MCF 10A (cell line): ENCODE measurements at regions of chr1 and their contacts with region 1.

Region 1: DNA sequence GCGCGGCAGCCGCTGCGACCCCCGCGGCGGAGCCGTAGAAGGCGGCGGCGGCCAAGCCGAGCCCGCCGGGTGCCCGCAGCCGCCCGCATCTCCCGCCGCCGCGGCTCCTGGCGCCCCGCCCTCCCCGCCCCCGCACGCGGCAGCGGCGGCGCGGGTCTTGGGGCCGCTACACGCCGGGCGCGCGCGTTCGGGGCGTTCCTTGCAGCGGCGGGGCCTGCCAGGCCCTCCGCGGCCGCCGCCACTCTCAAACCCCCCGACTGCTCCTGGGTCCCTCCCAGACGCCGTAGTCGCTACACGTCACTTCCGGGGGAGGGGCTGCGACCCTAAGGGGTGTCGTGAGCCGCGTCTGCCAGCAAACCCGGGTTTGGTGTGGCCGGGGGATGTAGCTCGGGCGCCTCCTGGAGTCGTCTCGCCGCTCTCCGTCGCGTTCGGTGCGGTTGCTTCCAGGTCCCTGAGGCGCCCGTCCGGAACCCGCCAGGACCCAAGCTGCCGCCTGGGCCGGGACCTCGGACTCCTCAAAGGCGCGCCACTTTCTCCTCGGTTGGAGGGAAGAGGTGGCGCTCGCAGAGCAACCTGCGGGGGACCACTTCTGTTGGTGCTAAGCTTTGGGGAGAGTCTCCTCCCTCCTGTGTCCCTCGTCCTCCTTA is at the start of gene ELK4:
- DNase-seq: peak; percentile 100
- H3K4me3 Mint-ChIP-seq: peak within 1 kb of the TSS; percentile 90
- H3K27ac Mint-ChIP-seq: peak within 1 kb of the TSS; percentile 91
- H3K4me1 Mint-ChIP-seq: peaks cover 35% of the 10 kb centered on the region
- H3K27me3 Mint-ChIP-seq: no peaks in the 10 kb centered on the region
- CTCF ChIP-seq: peak; percentile 87
- total RNA-seq, gene ELK4: 101 and 109 TPM in 2 replicates

Region 2: DNA sequence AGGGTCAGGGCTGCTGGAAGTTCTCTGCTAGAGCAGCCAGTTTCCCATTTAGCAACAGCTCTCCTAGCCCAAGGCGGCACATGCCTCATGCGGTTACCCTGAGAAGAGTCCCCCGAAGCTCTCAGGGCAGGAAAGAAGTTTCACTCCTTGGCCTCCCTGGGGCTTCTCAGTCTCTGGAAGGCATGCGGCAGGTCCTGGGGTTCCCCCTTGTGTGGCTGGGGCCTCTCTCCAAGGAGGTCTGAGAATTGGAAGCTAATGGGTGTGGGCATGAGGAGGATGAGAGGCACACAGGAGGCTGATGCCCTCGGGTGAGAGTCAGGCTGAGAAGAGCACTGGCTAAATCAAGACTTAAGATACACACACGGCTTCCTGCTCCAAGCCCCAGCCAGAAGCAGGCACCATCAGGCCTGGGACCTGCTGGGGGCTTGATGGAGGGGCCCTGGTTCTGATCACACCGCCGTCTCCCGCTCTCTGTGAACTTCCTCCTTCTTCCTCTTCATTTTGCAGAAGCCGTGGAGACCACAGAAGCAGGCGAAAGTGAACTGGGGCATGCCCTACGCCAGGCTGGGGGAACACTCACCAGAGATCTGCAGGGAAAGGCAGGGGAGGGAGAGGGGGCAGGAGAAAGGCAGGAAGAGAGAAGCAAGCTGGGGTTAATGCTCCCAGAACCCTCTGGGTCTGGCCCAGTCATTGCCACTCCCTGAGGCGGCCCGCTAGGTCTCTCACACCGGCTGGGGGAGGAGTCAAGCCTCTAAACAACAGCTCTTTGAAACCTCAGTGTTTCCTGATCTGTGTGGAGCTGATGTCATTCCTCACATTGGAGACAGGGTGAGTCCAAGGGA is 191.2 kb before region 1 on chr1:
- CTCF ChIA-PET with region 1: no interaction called
- POLR2A ChIA-PET with region 1: no interaction called
- intact Hi-C with region 1: no loop called
- DNase-seq: peak; percentile 93
- H3K4me3 Mint-ChIP-seq: peak overlapping the region; percentile 1
- H3K27ac Mint-ChIP-seq: peak overlapping the region; percentile 77
- H3K4me1 Mint-ChIP-seq: peaks cover 25% of the 10 kb centered on the region
- H3K27me3 Mint-ChIP-seq: no peaks in the 10 kb centered on the region
- CTCF ChIP-seq: no peak

Region 3: GRCh38 chr1:205493241-205494085 is 138.4 kb before region 1 on chr1:
- CTCF ChIA-PET with region 1: interaction called, 4 read pairs
- POLR2A ChIA-PET with region 1: interaction called, 23 read pairs
- intact Hi-C with region 1: no loop called
- DNase-seq: peak; percentile 99
- H3K4me3 Mint-ChIP-seq: peak overlapping the region; percentile 53
- H3K27ac Mint-ChIP-seq: peak overlapping the region; percentile 86
- H3K4me1 Mint-ChIP-seq: peaks cover 38% of the 10 kb centered on the region
- H3K27me3 Mint-ChIP-seq: no peaks in the 10 kb centered on the region
- CTCF ChIP-seq: no peak

Region 4: GRCh38 chr1:205543411-205544301 is 88.2 kb before region 1 on chr1:
- CTCF ChIA-PET with region 1: interaction called, 4 read pairs
- POLR2A ChIA-PET with region 1: interaction called, 25 read pairs
- intact Hi-C with region 1: loop called (anchors 2 kb)
- DNase-seq: peak; percentile 99
- H3K4me3 Mint-ChIP-seq: peak overlapping the region; percentile 66
- H3K27ac Mint-ChIP-seq: peak overlapping the region; percentile 58
- H3K4me1 Mint-ChIP-seq: peaks cover 9% of the 10 kb centered on the region
- H3K27me3 Mint-ChIP-seq: peaks cover 7% of the 10 kb centered on the region
- CTCF ChIP-seq: no peak

Region 5: DNA sequence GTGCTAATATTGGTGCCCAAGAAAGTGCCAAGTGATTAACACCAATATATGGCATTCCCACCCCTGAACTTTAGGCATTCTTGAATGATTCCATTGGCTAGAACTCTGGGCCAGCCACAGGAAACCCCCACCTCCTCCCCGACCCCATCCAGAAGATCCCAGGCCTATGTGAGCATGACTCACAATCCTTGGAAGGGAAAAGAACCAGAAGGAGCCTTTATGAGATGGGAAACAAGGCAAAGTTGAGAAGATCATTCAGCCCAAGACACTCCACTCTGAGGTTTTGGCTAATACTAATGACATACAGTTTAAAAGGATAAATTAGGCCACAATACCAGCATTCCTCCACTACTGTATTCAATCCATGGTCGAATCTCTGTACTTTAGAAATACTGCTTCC is 21.8 kb before region 1 on chr1:
- CTCF ChIA-PET with region 1: interaction called, 6 read pairs
- POLR2A ChIA-PET with region 1: interaction called, 105 read pairs
- intact Hi-C with region 1: no loop called
- DNase-seq: no peak
- H3K4me3 Mint-ChIP-seq: no peak overlapping the region
- H3K27ac Mint-ChIP-seq: peak overlapping the region; percentile 65
- H3K4me1 Mint-ChIP-seq: peaks cover 23% of the 10 kb centered on the region
- H3K27me3 Mint-ChIP-seq: no peaks in the 10 kb centered on the region
- CTCF ChIP-seq: no peak

Region 6: GRCh38 chr1:205645519-205645918 is 13.7 kb after region 1 on chr1:
- CTCF ChIA-PET with region 1: interaction called, 8 read pairs
- POLR2A ChIA-PET with region 1: interaction called, 12 read pairs
- intact Hi-C with region 1: no loop called
- DNase-seq: no peak
- H3K4me3 Mint-ChIP-seq: no peak overlapping the region
- H3K27ac Mint-ChIP-seq: no peak overlapping the region
- H3K4me1 Mint-ChIP-seq: no peaks in the 10 kb centered on the region
- H3K27me3 Mint-ChIP-seq: no peaks in the 10 kb centered on the region
- CTCF ChIP-seq: no peak